ENCODE measurements at regions of chr3 and their contacts with region 1.

Region 1: DNA sequence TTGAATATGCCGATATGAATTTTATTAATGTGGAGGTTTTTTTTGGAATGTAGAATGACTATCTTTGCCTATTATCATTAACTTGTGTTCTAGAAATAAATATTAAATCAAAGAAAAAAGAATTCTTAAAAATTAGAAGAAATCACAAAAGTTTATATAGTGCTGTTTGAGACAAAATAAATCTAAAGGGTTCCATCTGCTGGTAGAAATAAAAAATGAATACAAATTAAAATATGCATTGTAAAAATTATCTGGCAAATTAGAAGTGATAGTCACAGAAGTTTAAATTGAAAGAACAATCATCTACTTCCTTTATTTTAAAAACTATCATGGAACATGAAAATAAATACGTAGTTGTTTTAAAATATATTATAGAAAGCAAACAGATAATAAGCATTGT is 22.7 kb upstream of the ZBTB20 start:
- DNase-seq: no peak
- ATAC-seq: no peak
- H3K4me3 ChIP-seq: no peak overlapping the region
- H3K27ac ChIP-seq: no peak overlapping the region
- H3K4me1 ChIP-seq: no peaks in the 10 kb centered on the region
- H3K27me3 ChIP-seq: no peaks in the 10 kb centered on the region
- CTCF ChIP-seq: peak; percentile 17 to 66 (median 46)
- POLR2A ChIP-seq: no peak

Region 2: DNA sequence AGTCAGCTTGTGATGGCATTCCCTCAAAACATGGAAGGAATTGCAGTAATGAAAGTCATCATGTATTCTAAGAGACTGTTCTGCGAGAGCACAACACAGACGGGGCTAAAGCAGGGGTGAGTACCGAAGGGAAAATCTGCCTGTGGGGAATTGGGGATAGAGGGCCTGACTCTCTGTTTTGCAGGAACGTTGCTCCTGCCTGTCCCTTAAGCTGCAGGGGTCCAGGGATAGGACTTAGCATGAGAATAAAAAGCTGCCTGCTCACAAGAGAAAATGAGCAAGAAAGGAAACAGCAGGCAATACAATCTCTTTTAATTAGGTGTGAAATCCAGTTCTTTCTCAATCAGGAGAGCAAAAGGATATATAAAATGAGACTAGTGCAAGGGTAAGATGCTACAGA is 813.7 kb before region 1 on chr3:
- intact Hi-C with region 1: loop called in 7 of 10 experiments (anchors 5 to 10 kb)
- DNase-seq: no peak
- ATAC-seq: no peak
- H3K4me3 ChIP-seq: no peak overlapping the region
- H3K27ac ChIP-seq: no peak overlapping the region
- H3K4me1 ChIP-seq: peaks cover 0 to 29% (median 7%) of the 10 kb centered on the region in 12 donors
- H3K27me3 ChIP-seq: no peaks in the 10 kb centered on the region
- CTCF ChIP-seq: no peak
- POLR2A ChIP-seq: no peak

Region 3: GRCh38 chr3:114362815-114363214 is 807.0 kb before region 1 on chr3:
- intact Hi-C with region 1: loop called in 7 of 10 experiments (anchors 5 to 10 kb)
- DNase-seq: no peak
- ATAC-seq: peak in 3 of 4 donors; percentile 29 to 65 (median 54)
- H3K4me3 ChIP-seq: no peak overlapping the region
- H3K27ac ChIP-seq: peak overlapping the region in 10 of 12 donors; percentile 47 to 80 (median 72)
- H3K4me1 ChIP-seq: peaks cover 0 to 50% (median 33%) of the 10 kb centered on the region in 12 donors
- H3K27me3 ChIP-seq: no peaks in the 10 kb centered on the region
- CTCF ChIP-seq: peak in 10 of 12 donors; percentile 33 to 59 (median 48)
- POLR2A ChIP-seq: no peak

Region 4: DNA sequence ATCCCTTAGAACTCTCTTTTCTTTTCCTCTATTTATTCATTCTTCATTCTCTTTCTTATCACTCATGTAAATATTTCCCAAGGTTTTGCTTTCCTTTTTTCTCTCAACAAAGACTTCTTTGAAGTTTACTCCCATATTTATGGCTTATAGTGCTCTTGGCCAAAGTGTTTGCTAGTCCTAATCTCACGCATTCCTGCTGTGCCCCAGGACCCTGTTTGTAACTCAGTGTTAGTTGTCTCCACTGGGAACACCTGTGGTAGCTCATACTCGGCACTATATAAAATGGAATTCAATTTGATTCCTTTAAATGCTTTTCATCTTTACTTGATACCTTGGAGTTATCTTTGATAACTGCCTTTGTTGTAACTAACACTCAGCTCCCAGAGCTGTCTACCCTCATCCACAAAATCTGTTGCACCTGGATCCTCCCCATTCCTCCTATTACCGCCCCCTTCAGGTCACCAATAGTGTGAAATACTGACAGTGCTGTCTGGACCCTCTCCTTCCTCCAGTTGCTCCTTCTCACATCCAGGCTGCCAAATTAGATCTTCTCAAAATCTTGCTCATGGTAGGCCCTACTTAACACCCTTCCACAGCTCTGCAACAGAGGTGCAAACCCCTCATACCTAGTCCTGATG is 799.2 kb before region 1 on chr3:
- intact Hi-C with region 1: loop called in 5 of 10 experiments (anchors 10 kb)
- DNase-seq: no peak
- ATAC-seq: no peak
- H3K4me3 ChIP-seq: no peak overlapping the region
- H3K27ac ChIP-seq: no peak overlapping the region
- H3K4me1 ChIP-seq: peaks cover 0 to 37% (median 19%) of the 10 kb centered on the region in 12 donors
- H3K27me3 ChIP-seq: no peaks in the 10 kb centered on the region
- CTCF ChIP-seq: peak in 2 of 12 donors; percentile 3 to 10
- POLR2A ChIP-seq: no peak

Region 5: GRCh38 chr3:114827495-114827894 is 342.3 kb before region 1 on chr3:
- intact Hi-C with region 1: loop called in 7 of 10 experiments (anchors 5 kb)
- DNase-seq: no peak
- ATAC-seq: peak in 3 of 4 donors; percentile 66 to 68 (median 67)
- H3K4me3 ChIP-seq: no peak overlapping the region
- H3K27ac ChIP-seq: no peak overlapping the region
- H3K4me1 ChIP-seq: peaks cover 0 to 6% (median 0%) of the 10 kb centered on the region in 12 donors
- H3K27me3 ChIP-seq: no peaks in the 10 kb centered on the region
- CTCF ChIP-seq: peak; percentile 49 to 80 (median 66)
- POLR2A ChIP-seq: no peak

Region 6: DNA sequence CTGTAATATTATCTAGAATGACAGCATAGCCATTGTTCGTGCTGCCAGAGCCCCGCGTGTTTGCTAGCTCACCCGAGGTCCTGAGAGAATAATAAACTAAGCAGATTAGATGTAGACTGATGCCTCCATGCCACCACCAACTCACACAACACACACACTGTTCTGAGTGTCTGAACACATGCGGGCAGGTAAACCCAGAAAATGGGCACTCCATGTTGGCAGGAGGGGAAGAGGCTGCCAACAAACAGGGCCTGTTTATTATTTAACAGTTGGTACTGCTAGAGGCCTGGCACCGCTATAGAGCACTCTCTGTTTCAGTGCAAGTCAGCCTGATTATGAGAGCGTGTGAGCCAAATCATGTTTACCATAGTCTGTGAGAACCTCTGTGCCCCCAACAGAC is 321.7 kb before region 1 on chr3:
- intact Hi-C with region 1: loop called in 1 of 10 experiments (anchors 10 kb)
- DNase-seq: peak in 1 of 5 donors; percentile 24
- ATAC-seq: peak; percentile 66 to 83 (median 82)
- H3K4me3 ChIP-seq: no peak overlapping the region
- H3K27ac ChIP-seq: peak overlapping the region in 5 of 12 donors; percentile 14 to 41 (median 33)
- H3K4me1 ChIP-seq: peaks cover 0 to 30% (median 12%) of the 10 kb centered on the region in 12 donors
- H3K27me3 ChIP-seq: no peaks in the 10 kb centered on the region
- CTCF ChIP-seq: no peak
- POLR2A ChIP-seq: no peak

Region 7: DNA sequence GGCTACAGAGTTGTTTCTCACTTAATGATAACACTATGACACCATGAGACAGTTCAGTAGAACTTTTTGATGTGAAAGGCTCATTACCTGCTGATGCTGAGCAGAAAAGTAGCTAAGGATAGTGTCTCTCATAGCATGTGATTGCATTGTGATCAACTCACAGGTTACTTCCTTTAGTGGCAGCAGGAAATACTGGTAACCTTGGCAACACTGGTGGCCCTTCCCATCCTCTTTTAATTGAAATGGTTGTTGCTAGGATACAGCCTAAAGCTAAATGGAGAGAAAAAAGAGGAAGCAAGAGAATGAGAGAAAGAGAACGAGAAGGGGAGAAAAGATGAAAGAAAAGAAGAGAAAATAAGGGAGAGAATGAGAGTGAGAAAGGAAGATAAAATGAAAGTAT is 248.8 kb after region 1 on chr3:
- intact Hi-C with region 1: no loop called
- DNase-seq: no peak
- ATAC-seq: no peak
- H3K4me3 ChIP-seq: no peak overlapping the region
- H3K27ac ChIP-seq: no peak overlapping the region
- H3K4me1 ChIP-seq: no peaks in the 10 kb centered on the region
- H3K27me3 ChIP-seq: no peaks in the 10 kb centered on the region
- CTCF ChIP-seq: no peak
- POLR2A ChIP-seq: no peak

Region 8: GRCh38 chr3:115428841-115429240 is 259.0 kb after region 1 on chr3:
- intact Hi-C with region 1: no loop called
- DNase-seq: peak in 1 of 5 donors; percentile 29
- ATAC-seq: peak in 2 of 4 donors; percentile 56 to 65
- H3K4me3 ChIP-seq: no peak overlapping the region
- H3K27ac ChIP-seq: no peak overlapping the region
- H3K4me1 ChIP-seq: peaks cover 0 to 5% (median 0%) of the 10 kb centered on the region in 12 donors
- H3K27me3 ChIP-seq: no peaks in the 10 kb centered on the region
- CTCF ChIP-seq: no peak
- POLR2A ChIP-seq: no peak